ENCODE measurements at regions of chr7 and their contacts with region 1.

Region 1: GRCh38 chr7:6637544-6638229 is 569 bp downstream of the ZNF316 start:
- DNase-seq: no peak
- H3K4me3 ChIP-seq: peak overlapping the region; percentile 77 to 99 (median 93)
- H3K27ac ChIP-seq: peak overlapping the region; percentile 32 to 78 (median 68)
- H3K4me1 ChIP-seq: peaks cover 14 to 43% (median 36%) of the 10 kb centered on the region in 4 donors
- H3K27me3 ChIP-seq: no peaks in the 10 kb centered on the region
- CTCF ChIP-seq: peak in 1 of 3 experiments; percentile 24
- EP300 ChIP-seq: no peak
- POLR2A ChIP-seq: no peak

Region 2: GRCh38 chr7:6675807-6676405 is 38.2 kb after region 1 on chr7:
- intact Hi-C with region 1: no loop called
- DNase-seq: no peak
- H3K4me3 ChIP-seq: no peak overlapping the region
- H3K27ac ChIP-seq: no peak overlapping the region
- H3K4me1 ChIP-seq: no peaks in the 10 kb centered on the region
- H3K27me3 ChIP-seq: peaks cover 0 to 3% (median 0%) of the 10 kb centered on the region in 4 donors
- CTCF ChIP-seq: no peak
- EP300 ChIP-seq: no peak
- POLR2A ChIP-seq: no peak

Region 3: DNA sequence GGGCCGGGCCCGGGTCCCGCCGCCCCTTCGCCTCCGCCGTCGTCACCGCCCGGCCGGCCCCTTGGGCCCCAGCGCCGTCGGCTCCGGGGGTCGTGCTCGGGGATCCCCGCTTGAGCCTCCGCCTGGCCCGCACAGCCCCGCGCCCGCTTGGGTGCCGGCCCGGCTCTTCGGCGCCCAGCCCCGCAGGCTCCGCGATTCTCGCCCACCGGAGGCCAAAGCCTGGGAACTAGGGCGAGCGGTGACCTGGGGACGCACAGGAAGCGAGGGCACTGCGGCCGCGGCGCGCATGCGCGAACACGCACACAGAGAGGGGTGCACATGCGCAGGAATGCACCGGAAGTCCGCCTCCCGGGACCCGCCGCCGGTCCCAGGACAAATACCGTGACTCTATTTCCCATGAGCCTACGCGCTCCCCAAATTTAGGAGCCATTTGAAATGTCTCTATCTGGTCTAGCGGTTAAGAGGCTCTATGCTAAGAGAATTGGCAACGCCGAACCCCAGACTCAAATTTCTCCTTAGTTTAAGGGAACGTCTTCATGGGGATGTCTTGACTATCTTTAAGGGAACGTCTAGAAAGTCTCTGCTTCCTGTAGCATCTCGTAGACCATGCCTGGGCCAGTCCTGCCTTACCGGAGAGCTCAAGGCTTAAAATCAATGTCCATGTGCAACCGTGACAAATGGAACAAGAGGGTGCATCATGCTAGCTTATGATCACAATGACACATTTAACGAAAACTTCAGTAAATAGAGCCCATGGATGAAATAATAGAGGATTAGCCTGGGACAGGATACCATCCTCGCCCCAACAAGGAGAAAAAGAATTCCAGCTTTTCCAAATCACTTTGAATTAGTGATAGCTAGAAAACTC is 69.2 kb after region 1 on chr7 and contains the start of gene ZNF12:
- intact Hi-C with region 1: loop called (anchors 5 kb)
- DNase-seq: peak; percentile 99
- H3K4me3 ChIP-seq: peak within 1 kb of the TSS; percentile 88 to 100 (median 96)
- H3K27ac ChIP-seq: peak within 1 kb of the TSS; percentile 89 to 94 (median 92)
- H3K4me1 ChIP-seq: peaks cover 33 to 45% (median 37%) of the 10 kb centered on the region in 4 donors
- H3K27me3 ChIP-seq: no peaks in the 10 kb centered on the region
- CTCF ChIP-seq: peak in 1 of 3 experiments; percentile 16
- EP300 ChIP-seq: no peak
- POLR2A ChIP-seq: no peak
- total RNA-seq, gene ZNF12: 19.4 to 25.6 (median 23.5) TPM

Region 4: GRCh38 chr7:6729492-6730342 is 92.0 kb after region 1 on chr7:
- intact Hi-C with region 1: loop called (anchors 2 kb)
- DNase-seq: peak; percentile 97
- H3K4me3 ChIP-seq: peak overlapping the region; percentile 82 to 91 (median 84)
- H3K27ac ChIP-seq: peak overlapping the region; percentile 84 to 88 (median 86)
- H3K4me1 ChIP-seq: peaks cover 8 to 23% (median 21%) of the 10 kb centered on the region in 4 donors
- H3K27me3 ChIP-seq: no peaks in the 10 kb centered on the region
- CTCF ChIP-seq: peak in 2 of 3 experiments; percentile 16 to 17
- EP300 ChIP-seq: no peak
- POLR2A ChIP-seq: no peak

Measured in esophagus muscularis mucosa (tissue), 4 donors.